ENCODE measurements at regions of chr7 and their contacts with region 1.

Region 1: DNA sequence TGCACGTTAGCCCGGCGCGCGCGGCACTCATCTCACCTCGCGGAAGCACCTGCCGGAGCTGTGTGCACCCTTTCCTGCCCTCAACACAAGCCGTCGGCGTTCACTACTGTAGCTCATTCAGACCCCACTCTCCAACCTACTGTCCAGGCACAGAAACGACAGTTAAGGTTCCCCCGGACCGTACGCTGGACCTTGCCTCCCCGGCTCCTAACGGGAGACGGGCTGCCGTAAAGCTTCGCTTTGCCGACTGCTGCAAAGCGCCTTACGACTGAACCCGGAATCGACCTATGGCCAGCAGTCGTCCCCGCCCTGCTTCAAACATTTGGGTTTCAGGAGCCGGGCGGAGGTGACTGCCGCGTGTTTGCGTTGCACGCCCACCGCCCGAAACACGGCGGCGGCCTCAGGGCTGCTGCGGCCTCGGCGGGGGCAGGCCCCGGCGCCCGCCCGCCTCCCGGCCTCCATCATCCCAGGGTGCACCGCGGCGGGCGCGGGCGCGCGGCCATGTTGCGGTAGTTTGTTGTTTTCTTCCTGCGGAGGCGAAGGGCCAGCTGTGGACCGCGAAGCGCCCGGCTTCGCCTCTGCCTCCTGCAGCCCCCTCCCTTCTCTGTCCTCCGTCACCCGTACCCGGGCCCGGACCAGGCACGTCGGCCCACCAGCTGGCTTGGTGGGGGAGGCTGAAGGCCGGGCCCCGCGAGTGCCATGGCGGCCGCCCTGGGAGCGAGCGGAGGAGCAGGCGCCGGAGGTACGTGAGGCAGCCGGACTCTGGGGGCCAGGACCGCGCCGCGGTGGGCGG is at the start of gene RBM33:
- DNase-seq: peak; percentile 59 to 87 (median 78)
- ATAC-seq: peak; percentile 76
- H3K4me3 ChIP-seq: peak within 1 kb of the TSS; percentile 97 to 98
- H3K4me3 Mint-ChIP-seq: peak within 1 kb of the TSS; percentile 98
- H3K27ac ChIP-seq: peak within 1 kb of the TSS; percentile 82 to 92
- H3K27ac Mint-ChIP-seq: peak within 1 kb of the TSS; percentile 99
- H3K4me1 ChIP-seq: peaks cover 31% of the 10 kb centered on the region
- H3K4me1 Mint-ChIP-seq: peaks cover 52% of the 10 kb centered on the region
- H3K27me3 ChIP-seq: no peaks in the 10 kb centered on the region
- H3K27me3 Mint-ChIP-seq: no peaks in the 10 kb centered on the region
- CTCF ChIP-seq: no peak
- total RNA-seq, gene RBM33: 169 to 184 TPM

Region 2: GRCh38 chr7:155205368-155206317 is 438.7 kb before region 1 on chr7:
- CTCF ChIA-PET with region 1: no interaction called
- POLR2A ChIA-PET with region 1: no interaction called
- intact Hi-C with region 1: loop called in 1 of 2 experiments (anchors 10 kb)
- DNase-seq: peak; percentile 71 to 97 (median 81)
- ATAC-seq: peak; percentile 90
- H3K4me3 ChIP-seq: peak overlapping the region; percentile 59 to 65
- H3K4me3 Mint-ChIP-seq: peak overlapping the region; percentile 80
- H3K27ac ChIP-seq: peak overlapping the region; percentile 59 to 94
- H3K27ac Mint-ChIP-seq: peak overlapping the region; percentile 94
- H3K4me1 ChIP-seq: peaks cover 14% of the 10 kb centered on the region
- H3K4me1 Mint-ChIP-seq: peaks cover 22% of the 10 kb centered on the region
- H3K27me3 ChIP-seq: no peaks in the 10 kb centered on the region
- H3K27me3 Mint-ChIP-seq: no peaks in the 10 kb centered on the region
- CTCF ChIP-seq: no peak

Region 3: GRCh38 chr7:155681663-155682062 is 37.3 kb after region 1 on chr7:
- CTCF ChIA-PET with region 1: no interaction called
- POLR2A ChIA-PET with region 1: no interaction called
- intact Hi-C with region 1: loop called in 1 of 2 experiments (anchors 5 kb)
- DNase-seq: no peak
- ATAC-seq: no peak
- H3K4me3 ChIP-seq: no peak overlapping the region
- H3K4me3 Mint-ChIP-seq: no peak overlapping the region
- H3K27ac ChIP-seq: no peak overlapping the region
- H3K27ac Mint-ChIP-seq: no peak overlapping the region
- H3K4me1 ChIP-seq: peaks cover 20% of the 10 kb centered on the region
- H3K4me1 Mint-ChIP-seq: peaks cover 64% of the 10 kb centered on the region
- H3K27me3 ChIP-seq: no peaks in the 10 kb centered on the region
- H3K27me3 Mint-ChIP-seq: no peaks in the 10 kb centered on the region
- CTCF ChIP-seq: no peak

Region 4: GRCh38 chr7:155763691-155764437 is 119.5 kb after region 1 on chr7:
- CTCF ChIA-PET with region 1: interaction called, 3 read pairs
- POLR2A ChIA-PET with region 1: interaction called, 4 read pairs
- intact Hi-C with region 1: loop called (anchors 5 kb)
- DNase-seq: peak in 8 of 9 experiments; percentile 23 to 80 (median 60)
- ATAC-seq: peak; percentile 80
- H3K4me3 ChIP-seq: peak overlapping the region in 1 of 2 experiments; percentile 28
- H3K4me3 Mint-ChIP-seq: peak overlapping the region; percentile 78
- H3K27ac ChIP-seq: peak overlapping the region; percentile 26 to 86
- H3K27ac Mint-ChIP-seq: peak overlapping the region; percentile 91
- H3K4me1 ChIP-seq: peaks cover 31% of the 10 kb centered on the region
- H3K4me1 Mint-ChIP-seq: peaks cover 54% of the 10 kb centered on the region
- H3K27me3 ChIP-seq: no peaks in the 10 kb centered on the region
- H3K27me3 Mint-ChIP-seq: no peaks in the 10 kb centered on the region
- CTCF ChIP-seq: no peak

Measured in CD8-positive, alpha-beta T cell (primary cell).